ENCODE measurements at regions of chr11 and their contacts with region 1.

Region 1: GRCh38 chr11:121740902-121741301 is 288.1 kb upstream of the SORL1-AS1 start:
- DNase-seq: no peak
- ATAC-seq: no peak
- H3K4me3 ChIP-seq: no peak overlapping the region
- H3K27ac ChIP-seq: peak overlapping the region; percentile 83; the same call in 1 of the 2 replicates
- H3K4me1 ChIP-seq: peaks cover 8% of the 10 kb centered on the region; the same call in 1 of the 2 replicates
- H3K27me3 ChIP-seq: no peaks in the 10 kb centered on the region
- CTCF ChIP-seq: no peak
- POLR2A ChIP-seq: no peak
- RAD21 ChIP-seq: no peak

Region 2: DNA sequence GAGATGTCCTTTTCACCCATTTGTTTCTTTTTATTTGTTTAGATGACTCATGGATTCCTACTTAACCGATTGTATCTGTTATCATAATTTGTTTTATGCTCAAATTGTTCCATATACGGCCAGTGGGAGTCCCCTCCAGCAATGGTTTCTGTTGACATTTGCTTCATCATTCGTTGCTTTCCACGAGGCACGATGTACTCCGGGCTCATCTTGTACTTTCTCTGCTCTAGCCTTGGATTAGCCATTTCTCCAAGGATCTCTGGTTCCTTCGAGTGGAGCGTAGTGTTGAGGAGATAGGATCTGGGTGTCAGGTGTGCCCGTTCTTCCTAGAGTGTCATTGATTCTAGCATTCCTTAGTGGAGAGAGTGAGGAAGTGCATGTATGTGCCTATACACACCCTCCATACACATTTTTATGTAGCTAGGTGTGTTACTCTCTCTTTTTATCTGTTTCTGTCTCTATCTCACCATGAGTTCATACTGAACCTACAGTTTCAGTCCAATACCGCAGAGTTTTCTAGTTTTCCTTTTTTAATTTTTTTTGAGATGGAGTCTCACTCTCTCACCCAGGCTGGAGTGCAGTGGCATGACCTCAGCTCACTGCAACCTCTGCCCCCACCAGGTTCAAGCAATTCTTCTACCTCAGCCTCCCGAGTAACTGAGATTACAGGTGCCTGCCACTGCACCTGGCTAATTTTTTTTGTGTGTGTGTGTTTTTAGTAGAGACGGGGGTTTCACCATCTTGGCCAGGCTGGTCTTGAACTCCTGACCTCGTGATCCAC is 608.5 kb before region 1 on chr11:
- CTCF ChIA-PET with region 1: no interaction called
- POLR2A ChIA-PET with region 1: no interaction called
- dilution Hi-C with region 1: no loop called
- in situ Hi-C with region 1: no loop called
- intact Hi-C with region 1: no loop called
- DNase-seq: no peak
- ATAC-seq: no peak
- H3K4me3 ChIP-seq: no peak overlapping the region
- H3K27ac ChIP-seq: no peak overlapping the region
- H3K4me1 ChIP-seq: no peaks in the 10 kb centered on the region
- H3K27me3 ChIP-seq: peaks cover 3% of the 10 kb centered on the region; the same call in 1 of the 2 replicates
- CTCF ChIP-seq: no peak
- POLR2A ChIP-seq: no peak
- RAD21 ChIP-seq: no peak

Region 3: DNA sequence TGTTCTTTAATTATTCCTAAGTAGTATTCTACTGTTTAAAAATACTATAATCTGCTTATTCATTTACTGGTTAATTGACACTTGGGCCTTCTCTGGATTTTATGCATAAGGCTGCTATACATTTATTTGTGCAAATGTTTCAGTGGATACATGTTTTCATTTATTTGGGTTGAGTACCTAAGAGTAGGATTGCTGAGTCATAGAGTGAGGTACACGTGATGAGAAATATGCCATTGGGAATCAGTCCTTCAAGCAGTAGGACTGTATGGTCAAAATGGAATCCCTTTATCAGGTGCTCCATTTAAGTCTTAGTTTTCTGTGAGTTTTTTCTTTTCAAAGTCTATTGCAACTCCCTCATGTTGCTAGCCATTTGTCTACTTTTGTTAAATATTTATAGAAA is 13.0 kb before region 1 on chr11:
- CTCF ChIA-PET with region 1: no interaction called
- POLR2A ChIA-PET with region 1: no interaction called
- dilution Hi-C with region 1: no loop called
- in situ Hi-C with region 1: no loop called
- intact Hi-C with region 1: loop called (anchors 1 kb)
- DNase-seq: no peak
- ATAC-seq: no peak
- H3K4me3 ChIP-seq: no peak overlapping the region
- H3K27ac ChIP-seq: no peak overlapping the region
- H3K4me1 ChIP-seq: peaks cover 4% of the 10 kb centered on the region; the same call in 1 of the 2 replicates
- H3K27me3 ChIP-seq: no peaks in the 10 kb centered on the region
- CTCF ChIP-seq: no peak
- POLR2A ChIP-seq: no peak
- RAD21 ChIP-seq: no peak

Region 4: GRCh38 chr11:121780971-121781370 is 40.1 kb after region 1 on chr11:
- CTCF ChIA-PET with region 1: no interaction called
- POLR2A ChIA-PET with region 1: no interaction called
- dilution Hi-C with region 1: no loop called
- in situ Hi-C with region 1: no loop called
- intact Hi-C with region 1: loop called (anchors 1 kb)
- DNase-seq: no peak
- ATAC-seq: no peak
- H3K4me3 ChIP-seq: no peak overlapping the region
- H3K27ac ChIP-seq: no peak overlapping the region
- H3K4me1 ChIP-seq: no peaks in the 10 kb centered on the region
- H3K27me3 ChIP-seq: no peaks in the 10 kb centered on the region
- CTCF ChIP-seq: no peak
- POLR2A ChIP-seq: no peak
- RAD21 ChIP-seq: no peak